AG04449 (cell line): ENCODE measurements at regions of chr7 and their contacts with region 1.

Region 1: GRCh38 chr7:90595801-90596671 is at the start of gene CDK14:
- DNase-seq: no peak
- H3K4me3 ChIP-seq: peak within 1 kb of the TSS; percentile 72
- CTCF ChIP-seq: peak; percentile 73

Region 2: GRCh38 chr7:90346336-90347125 is 249.5 kb before region 1 on chr7 and contains the start of gene GTPBP10:
- CTCF ChIA-PET with region 1: no interaction called
- POLR2A ChIA-PET with region 1: no interaction called
- DNase-seq: peak; percentile 69
- H3K4me3 ChIP-seq: peak within 1 kb of the TSS; percentile 96
- CTCF ChIP-seq: peak; percentile 90

Region 3: GRCh38 chr7:90579171-90579688 is 16.8 kb before region 1 on chr7:
- CTCF ChIA-PET with region 1: interaction called, 14 read pairs
- POLR2A ChIA-PET with region 1: no interaction called
- DNase-seq: peak; percentile 56
- H3K4me3 ChIP-seq: no peak overlapping the region
- CTCF ChIP-seq: no peak

Region 4: DNA sequence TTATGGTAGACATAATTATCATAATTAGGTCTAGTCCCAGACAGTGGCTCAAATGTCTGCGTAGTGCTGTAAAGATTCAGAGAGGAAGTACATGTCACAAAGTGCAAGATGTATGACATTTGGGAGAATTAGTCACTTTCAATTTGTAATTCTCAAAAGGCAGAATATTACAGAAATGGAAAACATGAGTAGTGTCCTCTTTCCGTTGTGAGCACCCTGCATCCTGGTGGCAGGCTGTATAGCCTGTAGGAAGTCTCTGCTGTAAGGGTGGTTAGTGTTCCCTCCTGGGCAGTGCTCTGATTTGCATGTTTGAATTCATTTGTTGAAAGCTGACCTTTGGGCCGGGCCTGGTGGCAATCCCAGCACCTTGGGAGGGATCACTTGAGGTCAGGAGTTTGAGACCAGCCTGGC is 17.1 kb after region 1 on chr7:
- CTCF ChIA-PET with region 1: interaction called, 10 read pairs
- POLR2A ChIA-PET with region 1: no interaction called
- DNase-seq: no peak
- H3K4me3 ChIP-seq: no peak overlapping the region
- CTCF ChIP-seq: no peak

Region 5: DNA sequence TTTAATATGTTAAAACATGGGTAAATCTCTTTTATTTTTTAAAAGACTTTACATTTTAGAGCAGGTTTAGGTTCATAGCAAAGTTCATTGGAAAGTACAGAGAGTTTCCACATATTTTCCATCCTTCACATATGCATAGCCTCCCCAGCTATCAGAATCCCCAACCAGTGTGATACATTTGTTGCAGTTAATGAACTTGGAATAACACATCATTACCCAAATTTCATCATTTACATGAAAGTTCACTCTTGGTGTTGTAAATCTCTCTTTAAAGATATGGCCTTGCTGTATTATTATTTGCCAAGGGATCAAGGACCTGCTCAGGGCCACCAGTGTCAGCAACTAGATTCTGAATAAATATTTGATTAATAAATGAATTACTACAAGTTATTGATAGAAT is 263.5 kb after region 1 on chr7:
- CTCF ChIA-PET with region 1: no interaction called
- POLR2A ChIA-PET with region 1: no interaction called
- DNase-seq: no peak
- H3K4me3 ChIP-seq: no peak overlapping the region
- CTCF ChIP-seq: no peak